GM10248 (cell line): ENCODE measurements at regions of chr2 and their contacts with region 1.

Region 1: GRCh38 chr2:20015472-20016083 is 3.1 kb upstream of the MATN3 start:
- DNase-seq: peak; percentile 58
- CTCF ChIP-seq: peak; percentile 45

Region 2: GRCh38 chr2:19955544-19956422 is 59.8 kb before region 1 on chr2:
- CTCF ChIA-PET with region 1: interaction called, 20 read pairs
- POLR2A ChIA-PET with region 1: no interaction called
- DNase-seq: peak; percentile 79
- CTCF ChIP-seq: peak; percentile 86

Region 3: GRCh38 chr2:19993731-19994130 is 21.8 kb before region 1 on chr2:
- CTCF ChIA-PET with region 1: interaction called, 13 read pairs
- POLR2A ChIA-PET with region 1: no interaction called
- DNase-seq: no peak
- CTCF ChIP-seq: no peak

Region 4: DNA sequence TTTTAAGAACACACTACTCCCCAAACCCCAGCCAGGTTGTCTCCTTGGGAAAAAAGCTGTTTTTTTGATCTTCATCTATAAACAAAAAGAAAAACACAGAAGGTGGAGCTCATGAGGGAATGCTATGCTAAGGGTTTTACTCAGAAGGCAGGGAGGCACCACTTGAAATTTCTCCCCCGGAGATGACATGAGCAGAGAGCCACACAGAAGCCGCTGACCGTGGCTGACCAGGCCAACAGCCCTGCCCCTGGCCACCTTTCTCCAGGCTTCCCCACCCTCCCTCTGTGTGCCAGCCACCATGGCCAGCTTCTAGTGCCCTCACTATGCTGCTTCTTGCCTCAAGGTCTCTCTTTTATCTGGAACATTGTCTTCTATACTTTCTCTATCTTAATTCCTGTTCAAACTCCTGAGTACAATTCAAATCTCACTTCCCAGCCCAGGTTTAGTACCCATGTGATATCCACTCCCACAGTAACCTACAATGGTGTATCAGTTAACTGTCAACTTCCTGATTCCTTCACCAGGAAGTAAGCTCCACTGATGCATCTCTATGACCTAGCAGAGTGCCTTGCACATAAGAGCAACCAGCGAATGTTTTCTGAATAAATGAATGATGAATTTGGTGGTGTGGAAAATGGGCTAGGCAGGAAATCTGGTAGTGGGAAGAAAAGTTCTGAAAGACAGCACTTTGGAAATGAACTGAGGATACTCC is 20.5 kb after region 1 on chr2:
- CTCF ChIA-PET with region 1: interaction called, 55 read pairs
- POLR2A ChIA-PET with region 1: no interaction called
- DNase-seq: no peak
- CTCF ChIP-seq: no peak

Region 5: GRCh38 chr2:20071397-20072383 is 56.1 kb after region 1 on chr2:
- CTCF ChIA-PET with region 1: interaction called, 18 read pairs
- POLR2A ChIA-PET with region 1: no interaction called
- DNase-seq: no peak
- CTCF ChIP-seq: no peak

Region 6: GRCh38 chr2:20106746-20107145 is 91.2 kb after region 1 on chr2:
- CTCF ChIA-PET with region 1: interaction called, 28 read pairs
- POLR2A ChIA-PET with region 1: no interaction called
- DNase-seq: no peak
- CTCF ChIP-seq: peak; percentile 35

Region 7: GRCh38 chr2:21552981-21553380 is 1537.4 kb after region 1 on chr2:
- CTCF ChIA-PET with region 1: no interaction called
- POLR2A ChIA-PET with region 1: no interaction called
- DNase-seq: no peak
- CTCF ChIP-seq: no peak